Activated CD4-positive, alpha-beta T cell treated with anti-CD3 and anti-CD28 coated beads for 36 hours (primary cell): ENCODE measurements at regions of chr5 and their contacts with region 1.

Region 1: GRCh38 chr5:1523771-1524480 is at the start of gene LPCAT1:
- DNase-seq: peak; percentile 86
- ATAC-seq: peak; percentile 89
- H3K4me3 Mint-ChIP-seq: peak within 1 kb of the TSS; percentile 82
- H3K27ac Mint-ChIP-seq: peak within 1 kb of the TSS; percentile 49
- H3K4me1 Mint-ChIP-seq: peaks cover 19% of the 10 kb centered on the region
- H3K27me3 Mint-ChIP-seq: no peaks in the 10 kb centered on the region
- total RNA-seq, gene LPCAT1: 42.5 to 54.5 TPM

Region 2: DNA sequence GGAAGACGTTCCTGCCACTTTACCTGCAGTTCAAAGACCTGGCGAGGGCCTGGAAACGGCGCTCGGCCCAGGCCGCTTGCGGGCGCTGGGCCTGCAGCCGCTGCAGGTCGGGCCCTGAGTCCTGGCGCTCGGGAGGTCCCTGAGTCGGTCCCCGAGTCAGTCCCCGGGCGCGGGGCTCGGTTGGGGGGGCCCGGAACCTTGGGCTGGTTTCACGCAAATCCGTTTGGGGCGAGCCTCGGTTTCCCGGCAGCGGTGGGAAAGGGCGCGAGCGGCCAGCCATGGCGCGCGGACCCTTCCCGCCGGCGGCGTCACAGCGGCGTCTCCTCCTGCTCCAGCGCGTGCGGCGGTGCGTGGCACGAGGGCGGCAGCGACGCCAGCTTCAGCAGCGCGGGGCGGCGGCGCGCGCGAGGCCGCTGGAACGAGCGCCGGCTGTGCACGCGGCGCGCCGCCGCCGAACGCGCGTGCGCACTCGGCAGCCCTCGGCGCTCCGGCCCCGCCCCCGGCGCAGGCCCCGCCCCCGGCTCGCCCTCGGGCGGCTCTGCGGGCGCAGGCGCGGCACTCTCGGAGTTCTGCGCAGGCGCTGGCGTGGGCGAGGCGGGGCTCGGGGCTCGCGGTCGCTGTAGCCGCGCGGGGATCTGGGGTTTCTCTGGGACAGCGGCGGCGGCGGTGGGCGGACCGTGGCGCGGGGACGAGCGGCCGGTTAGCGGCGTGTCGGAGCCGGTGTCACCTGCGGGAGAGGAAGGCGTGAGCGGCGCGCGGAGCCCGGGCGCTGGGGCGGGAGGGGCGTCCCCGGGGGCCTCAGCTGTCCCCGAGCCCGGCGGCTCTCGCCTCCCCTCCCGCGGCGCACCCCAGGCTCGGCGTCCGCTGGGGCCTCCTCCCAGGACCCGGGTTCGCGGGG is 1051.0 kb before region 1 on chr5:
- CTCF ChIA-PET with region 1: no interaction called
- POLR2A ChIA-PET with region 1: no interaction called
- intact Hi-C with region 1: loop called in 1 of 2 experiments (anchors 5 kb)
- DNase-seq: peak; percentile 93
- ATAC-seq: peak; percentile 80
- H3K4me3 Mint-ChIP-seq: peak overlapping the region; percentile 88
- H3K27ac Mint-ChIP-seq: peak overlapping the region; percentile 93
- H3K4me1 Mint-ChIP-seq: peaks cover 25% of the 10 kb centered on the region
- H3K27me3 Mint-ChIP-seq: peaks cover 4% of the 10 kb centered on the region

Region 3: GRCh38 chr5:923281-923873 is 600.5 kb before region 1 on chr5:
- CTCF ChIA-PET with region 1: no interaction called
- POLR2A ChIA-PET with region 1: no interaction called
- intact Hi-C with region 1: no loop called
- DNase-seq: peak; percentile 87
- ATAC-seq: peak; percentile 88
- H3K4me3 Mint-ChIP-seq: no peak overlapping the region
- H3K27ac Mint-ChIP-seq: no peak overlapping the region
- H3K4me1 Mint-ChIP-seq: peaks cover 26% of the 10 kb centered on the region
- H3K27me3 Mint-ChIP-seq: peaks cover 25% of the 10 kb centered on the region

Region 4: GRCh38 chr5:1294835-1295649 is 228.9 kb before region 1 on chr5 and contains the start of gene TERT:
- CTCF ChIA-PET with region 1: no interaction called
- POLR2A ChIA-PET with region 1: no interaction called
- intact Hi-C with region 1: loop called in 1 of 2 experiments (anchors 5 kb)
- DNase-seq: peak; percentile 90
- ATAC-seq: peak; percentile 88
- H3K4me3 Mint-ChIP-seq: peak within 1 kb of the TSS; percentile 55
- H3K27ac Mint-ChIP-seq: no peak within 1 kb of the TSS
- H3K4me1 Mint-ChIP-seq: peaks cover 11% of the 10 kb centered on the region
- H3K27me3 Mint-ChIP-seq: no peaks in the 10 kb centered on the region
- total RNA-seq, gene TERT: 8.5 to 11.9 TPM

Region 5: DNA sequence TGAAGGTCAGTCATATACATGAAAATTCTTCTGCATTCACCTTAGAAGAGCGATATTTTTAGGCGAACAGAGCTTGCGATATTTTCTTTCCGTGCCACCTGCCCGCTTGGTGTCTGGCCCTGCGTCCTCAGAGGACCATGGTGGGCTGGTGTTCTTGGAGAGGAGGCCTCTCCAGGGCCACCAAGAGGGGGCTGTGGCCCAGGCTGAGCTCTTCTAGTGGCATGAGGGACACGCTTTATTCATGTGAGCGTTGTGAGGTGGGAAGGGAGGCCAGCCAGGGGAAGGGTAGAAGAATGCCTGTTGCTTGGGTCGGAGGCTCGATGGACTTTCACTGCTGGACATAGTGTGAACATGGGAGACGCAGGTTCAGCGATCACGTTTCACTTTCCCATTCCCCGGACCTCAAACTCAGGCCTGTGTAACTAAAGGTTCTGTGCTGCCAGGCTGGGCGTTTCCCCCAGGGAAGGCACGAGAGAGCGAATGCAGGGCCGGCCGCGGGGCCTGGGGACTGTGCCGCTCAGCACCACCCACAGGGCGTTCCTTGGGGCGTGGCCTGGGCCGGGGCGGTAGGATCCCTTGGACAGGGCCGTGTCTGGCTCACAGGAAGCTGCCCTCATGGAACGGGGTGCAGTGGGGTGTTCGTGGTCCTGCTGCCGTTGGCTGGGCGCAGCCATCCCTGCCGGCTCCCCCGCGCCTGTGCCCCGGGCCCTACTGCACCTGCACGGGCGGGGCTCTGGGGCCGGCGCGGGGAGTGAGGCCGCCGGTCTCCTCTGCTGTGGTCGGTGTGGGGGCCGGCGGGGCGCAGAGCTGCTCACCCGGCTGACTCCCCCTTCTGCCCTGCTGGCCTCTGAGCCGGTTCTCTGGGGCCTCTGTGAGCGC is 138.3 kb before region 1 on chr5:
- CTCF ChIA-PET with region 1: no interaction called
- POLR2A ChIA-PET with region 1: no interaction called
- intact Hi-C with region 1: loop called in 1 of 2 experiments (anchors 5 kb)
- DNase-seq: peak; percentile 89
- ATAC-seq: peak; percentile 95
- H3K4me3 Mint-ChIP-seq: peak overlapping the region; percentile 87
- H3K27ac Mint-ChIP-seq: peak overlapping the region; percentile 90
- H3K4me1 Mint-ChIP-seq: peaks cover 23% of the 10 kb centered on the region
- H3K27me3 Mint-ChIP-seq: peaks cover 4% of the 10 kb centered on the region

Region 6: GRCh38 chr5:1536322-1536845 is 12.5 kb after region 1 on chr5:
- CTCF ChIA-PET with region 1: interaction called, 6 read pairs
- POLR2A ChIA-PET with region 1: interaction called, 4 read pairs
- intact Hi-C with region 1: loop called in 1 of 2 experiments (anchors 1 kb)
- DNase-seq: peak; percentile 86
- ATAC-seq: peak; percentile 100
- H3K4me3 Mint-ChIP-seq: peak overlapping the region; percentile 72
- H3K27ac Mint-ChIP-seq: peak overlapping the region; percentile 90
- H3K4me1 Mint-ChIP-seq: peaks cover 22% of the 10 kb centered on the region
- H3K27me3 Mint-ChIP-seq: peaks cover 2% of the 10 kb centered on the region

Region 7: GRCh38 chr5:1633605-1634336 is 109.8 kb after region 1 on chr5:
- CTCF ChIA-PET with region 1: no interaction called
- POLR2A ChIA-PET with region 1: no interaction called
- intact Hi-C with region 1: loop called in 1 of 2 experiments (anchors 2 kb)
- DNase-seq: peak; percentile 85
- ATAC-seq: peak; percentile 90
- H3K4me3 Mint-ChIP-seq: peak overlapping the region; percentile 89
- H3K27ac Mint-ChIP-seq: peak overlapping the region; percentile 95
- H3K4me1 Mint-ChIP-seq: peaks cover 33% of the 10 kb centered on the region
- H3K27me3 Mint-ChIP-seq: no peaks in the 10 kb centered on the region